Caco-2 (cell line): ENCODE measurements at regions of chr11 and their contacts with region 1.

Region 1: DNA sequence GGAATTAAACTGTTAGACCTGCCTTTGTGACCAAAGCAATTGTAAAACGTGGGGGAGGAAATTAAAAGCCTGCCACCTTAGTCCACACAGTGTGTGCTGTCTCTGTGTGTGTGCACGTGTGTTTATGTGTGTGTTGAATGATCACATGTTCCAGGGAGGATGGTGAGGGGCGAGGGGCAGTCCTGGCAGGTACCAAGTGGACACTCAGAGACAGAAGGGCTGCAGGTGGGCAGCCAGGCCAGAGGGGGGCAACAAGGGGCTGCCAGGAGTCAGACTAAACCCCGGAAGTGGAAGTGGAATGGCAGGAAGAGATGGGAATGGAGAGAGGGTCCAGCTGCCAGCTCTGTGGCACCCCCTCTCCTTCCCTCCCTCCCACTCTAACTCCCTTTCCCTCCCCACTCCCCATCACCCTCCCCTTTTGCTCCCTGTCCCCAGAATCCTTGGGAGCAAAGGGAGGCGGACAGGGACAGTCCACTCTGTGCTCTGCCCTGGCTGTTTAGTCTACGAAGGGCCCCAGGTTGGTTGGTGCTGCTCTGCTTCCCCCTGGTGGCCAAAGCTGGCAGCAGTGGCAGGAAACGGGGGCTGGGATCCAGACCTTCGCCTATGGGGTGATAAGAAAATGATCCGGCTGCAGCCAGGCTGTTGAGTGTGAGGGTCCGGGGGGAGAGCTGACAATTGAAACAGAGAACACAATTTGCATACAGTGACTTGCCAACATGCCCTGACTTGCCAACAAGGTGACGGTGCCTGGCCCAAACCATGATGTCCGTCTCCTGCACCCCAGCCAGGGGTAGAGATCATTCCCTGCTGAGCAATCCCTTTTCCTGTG is 24.4 kb downstream of the P2RY2 start:
- DNase-seq: peak; percentile 86 to 91
- H3K4me3 ChIP-seq: peak overlapping the region; percentile 36
- H3K4me3 Mint-ChIP-seq: peak overlapping the region; percentile 62
- H3K27ac Mint-ChIP-seq: peak overlapping the region; percentile 66
- H3K4me1 ChIP-seq: 0 out of 2 replicates have a peak, but pooled peaks cover 12% of the 10 kb centered on the region
- H3K4me1 Mint-ChIP-seq: peaks cover 17% of the 10 kb centered on the region
- H3K27me3 ChIP-seq: no peaks in the 10 kb centered on the region
- H3K27me3 Mint-ChIP-seq: no peaks in the 10 kb centered on the region
- CTCF ChIP-seq: peak; percentile 94 to 98

Region 2: DNA sequence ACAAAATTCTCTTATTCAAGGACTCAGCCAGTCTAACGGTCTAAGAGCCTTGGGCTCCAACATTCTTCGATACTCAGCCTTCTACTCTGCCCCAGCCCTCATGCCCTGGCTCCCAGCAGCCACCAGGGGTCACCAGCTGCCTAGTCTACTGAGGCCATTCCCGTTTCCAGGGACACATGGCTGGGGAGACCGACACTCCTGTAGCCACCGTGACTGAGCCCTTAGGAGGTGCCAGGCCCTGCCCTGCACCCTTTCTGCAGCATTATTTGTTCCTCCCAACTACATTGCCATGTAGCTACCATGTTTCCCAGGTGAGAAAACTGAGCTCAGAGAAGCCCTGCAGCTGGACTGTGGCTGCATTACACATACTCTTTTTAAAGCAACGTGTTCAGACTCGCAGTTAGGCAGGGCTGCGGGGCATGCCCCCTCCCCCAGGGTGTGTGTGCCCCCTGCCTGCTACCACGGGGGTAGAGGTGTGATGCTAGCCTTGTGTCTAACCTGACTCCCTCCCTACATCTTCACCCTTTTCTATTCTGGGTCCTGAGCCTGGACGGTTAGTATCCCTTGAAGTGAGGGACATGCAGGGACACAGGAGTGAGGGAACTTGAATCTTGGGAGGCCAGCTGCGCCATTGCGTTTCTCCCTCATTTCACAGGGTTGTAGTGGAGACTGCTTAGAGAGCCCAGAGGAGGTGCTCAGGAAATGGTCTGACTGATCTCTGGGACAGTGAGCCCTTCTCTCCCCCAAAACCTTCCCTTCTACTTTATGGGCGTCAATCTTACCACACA is 410.8 kb before region 1 on chr11:
- CTCF ChIA-PET with region 1: interaction called, 3 read pairs
- POLR2A ChIA-PET with region 1: no interaction called
- intact Hi-C with region 1: loop called (anchors 1 kb)
- DNase-seq: peak; percentile 89 to 93
- H3K4me3 ChIP-seq: no peak overlapping the region
- H3K4me3 Mint-ChIP-seq: no peak overlapping the region
- H3K27ac Mint-ChIP-seq: peak overlapping the region; percentile 58
- H3K4me1 ChIP-seq: peaks cover 10% of the 10 kb centered on the region
- H3K4me1 Mint-ChIP-seq: peaks cover 24% of the 10 kb centered on the region
- H3K27me3 ChIP-seq: no peaks in the 10 kb centered on the region
- H3K27me3 Mint-ChIP-seq: no peaks in the 10 kb centered on the region
- CTCF ChIP-seq: peak; percentile 98 to 99

Region 3: GRCh38 chr11:72924568-72925190 is 317.8 kb before region 1 on chr11:
- CTCF ChIA-PET with region 1: no interaction called
- POLR2A ChIA-PET with region 1: no interaction called
- intact Hi-C with region 1: loop called (anchors 2 kb)
- DNase-seq: peak in 1 of 2 experiments; percentile 40
- H3K4me3 ChIP-seq: no peak overlapping the region
- H3K4me3 Mint-ChIP-seq: no peak overlapping the region
- H3K27ac Mint-ChIP-seq: no peak overlapping the region
- H3K4me1 ChIP-seq: no peaks in the 10 kb centered on the region
- H3K4me1 Mint-ChIP-seq: no peaks in the 10 kb centered on the region
- H3K27me3 ChIP-seq: no peaks in the 10 kb centered on the region
- H3K27me3 Mint-ChIP-seq: no peaks in the 10 kb centered on the region
- CTCF ChIP-seq: peak; percentile 63 to 73

Region 4: DNA sequence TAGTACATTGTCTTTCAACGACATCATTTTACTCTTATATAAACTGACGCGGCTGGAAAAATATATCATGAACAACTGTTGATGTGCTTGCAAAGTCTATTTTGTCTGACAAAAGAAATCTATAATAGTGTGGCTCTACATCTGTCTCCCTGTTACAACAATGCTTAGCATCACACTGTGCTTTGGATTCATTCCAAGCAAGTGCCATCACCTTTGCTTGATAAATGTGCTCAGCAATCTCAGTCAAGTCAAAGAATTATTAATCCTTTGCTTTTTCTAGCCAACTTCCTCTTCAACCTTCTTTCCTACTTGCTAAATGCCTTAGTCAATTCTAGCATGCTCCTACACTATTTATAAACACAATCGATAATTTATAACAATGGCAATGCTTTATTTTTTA is 240.8 kb before region 1 on chr11:
- CTCF ChIA-PET with region 1: no interaction called
- POLR2A ChIA-PET with region 1: no interaction called
- intact Hi-C with region 1: no loop called
- DNase-seq: no peak
- H3K4me3 ChIP-seq: no peak overlapping the region
- H3K4me3 Mint-ChIP-seq: no peak overlapping the region
- H3K27ac Mint-ChIP-seq: no peak overlapping the region
- H3K4me1 ChIP-seq: peaks cover 12% of the 10 kb centered on the region
- H3K4me1 Mint-ChIP-seq: peaks cover 7% of the 10 kb centered on the region
- H3K27me3 ChIP-seq: no peaks in the 10 kb centered on the region
- H3K27me3 Mint-ChIP-seq: no peaks in the 10 kb centered on the region
- CTCF ChIP-seq: no peak

Region 5: GRCh38 chr11:73184953-73185671 is 57.4 kb before region 1 on chr11:
- CTCF ChIA-PET with region 1: interaction called, 41 read pairs
- POLR2A ChIA-PET with region 1: no interaction called
- intact Hi-C with region 1: loop called (anchors 1 kb)
- DNase-seq: peak; percentile 85 to 88
- H3K4me3 ChIP-seq: no peak overlapping the region
- H3K4me3 Mint-ChIP-seq: no peak overlapping the region
- H3K27ac Mint-ChIP-seq: no peak overlapping the region
- H3K4me1 ChIP-seq: peaks cover 21% of the 10 kb centered on the region
- H3K4me1 Mint-ChIP-seq: peaks cover 7% of the 10 kb centered on the region
- H3K27me3 ChIP-seq: no peaks in the 10 kb centered on the region
- H3K27me3 Mint-ChIP-seq: no peaks in the 10 kb centered on the region
- CTCF ChIP-seq: peak; percentile 98 to 99

Region 6: DNA sequence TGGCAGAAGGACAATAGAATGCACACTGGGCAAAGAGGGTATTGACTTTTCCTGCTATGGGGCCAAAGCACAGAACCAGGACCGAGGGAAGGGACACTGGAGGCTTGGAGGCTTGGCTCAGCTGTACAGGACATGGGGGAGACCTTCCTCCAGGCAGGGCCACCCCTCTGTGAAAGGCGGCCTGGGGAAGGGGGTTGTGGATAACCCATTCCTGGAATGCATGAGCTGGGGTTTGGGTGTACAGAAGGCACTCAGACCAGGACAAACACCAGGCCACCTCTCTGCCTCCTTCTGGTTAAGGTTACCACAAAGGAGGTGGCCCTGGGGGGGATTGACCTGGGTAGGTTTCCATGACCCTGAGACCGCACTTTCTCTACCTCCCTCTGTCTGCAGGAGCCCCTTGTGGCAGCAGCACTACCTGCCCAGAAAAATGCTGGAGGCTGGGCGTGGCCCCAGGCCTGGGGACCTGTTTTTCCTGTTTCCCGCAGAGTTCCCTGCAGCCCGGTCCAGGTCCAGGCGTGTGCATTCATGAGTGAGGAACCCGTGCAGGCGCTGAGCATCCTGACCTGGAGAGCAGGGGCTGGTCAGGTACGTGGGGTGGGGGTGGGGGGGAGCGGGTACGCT is 14.8 kb before region 1 on chr11:
- CTCF ChIA-PET with region 1: interaction called, 11 read pairs
- POLR2A ChIA-PET with region 1: no interaction called
- intact Hi-C with region 1: loop called (anchors 1 kb)
- DNase-seq: peak; percentile 97 to 98
- H3K4me3 ChIP-seq: no peak overlapping the region
- H3K4me3 Mint-ChIP-seq: no peak overlapping the region
- H3K27ac Mint-ChIP-seq: peak overlapping the region; percentile 64
- H3K4me1 ChIP-seq: peaks cover 39% of the 10 kb centered on the region
- H3K4me1 Mint-ChIP-seq: peaks cover 43% of the 10 kb centered on the region
- H3K27me3 ChIP-seq: no peaks in the 10 kb centered on the region
- H3K27me3 Mint-ChIP-seq: no peaks in the 10 kb centered on the region
- CTCF ChIP-seq: peak; percentile 78 to 96

Region 7: DNA sequence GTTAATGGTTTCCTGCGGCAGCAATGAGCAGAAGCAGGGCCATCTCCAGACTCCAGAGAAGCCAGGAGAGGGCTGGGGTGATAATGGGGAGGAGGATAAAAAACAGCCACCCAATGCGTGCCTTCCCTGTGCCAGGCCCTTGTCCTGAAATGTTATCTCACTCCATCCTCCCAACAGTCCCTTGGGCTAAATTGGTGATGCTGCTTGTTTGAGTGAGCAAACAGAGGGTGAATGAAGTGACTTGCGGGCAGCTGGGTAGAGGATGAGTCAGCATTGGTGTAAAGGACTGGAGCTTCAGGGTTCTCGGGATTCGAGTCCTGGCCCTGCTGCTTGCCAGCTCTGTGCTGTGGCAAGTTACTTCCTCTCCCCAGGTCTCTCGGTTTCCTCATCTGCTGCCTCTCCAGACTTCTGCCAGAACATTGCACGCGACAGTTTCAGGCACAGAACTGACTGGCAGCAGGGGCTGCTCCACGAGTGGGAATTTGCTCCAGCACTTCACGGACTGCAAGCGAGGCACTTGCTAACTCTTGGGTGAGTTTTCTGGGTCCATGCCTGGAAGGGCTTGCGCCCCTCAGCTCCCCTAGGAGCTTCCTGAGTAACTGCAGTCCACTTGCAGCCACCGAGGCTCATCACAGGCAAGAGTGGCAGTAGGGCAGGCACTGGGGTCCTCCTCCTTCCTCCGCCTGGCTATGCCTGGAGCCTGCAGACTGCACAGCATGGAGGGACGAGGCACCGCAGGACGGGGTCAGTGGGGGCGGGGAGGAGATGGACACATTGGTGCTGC is 29.7 kb after region 1 on chr11 and contains the start of gene P2RY6:
- CTCF ChIA-PET with region 1: interaction called, 11 read pairs
- POLR2A ChIA-PET with region 1: no interaction called
- intact Hi-C with region 1: loop called (anchors 1 kb)
- DNase-seq: peak; percentile 88 to 93
- H3K4me3 ChIP-seq: peak within 1 kb of the TSS; percentile 38
- H3K4me3 Mint-ChIP-seq: peak within 1 kb of the TSS; percentile 80
- H3K27ac Mint-ChIP-seq: peak within 1 kb of the TSS; percentile 99
- H3K4me1 ChIP-seq: peaks cover 79% of the 10 kb centered on the region
- H3K4me1 Mint-ChIP-seq: peaks cover 81% of the 10 kb centered on the region
- H3K27me3 ChIP-seq: no peaks in the 10 kb centered on the region
- H3K27me3 Mint-ChIP-seq: no peaks in the 10 kb centered on the region
- CTCF ChIP-seq: no peak
- total RNA-seq, gene P2RY6: 48.4 and 55.7 TPM in 2 replicates

Region 8: GRCh38 chr11:73288873-73289707 is 46.6 kb after region 1 on chr11:
- CTCF ChIA-PET with region 1: interaction called, 22 read pairs
- POLR2A ChIA-PET with region 1: interaction called, 5 read pairs
- intact Hi-C with region 1: loop called (anchors 1 kb)
- DNase-seq: peak; percentile 87 to 88
- H3K4me3 ChIP-seq: no peak overlapping the region
- H3K4me3 Mint-ChIP-seq: no peak overlapping the region
- H3K27ac Mint-ChIP-seq: peak overlapping the region; percentile 51
- H3K4me1 ChIP-seq: peaks cover 57% of the 10 kb centered on the region
- H3K4me1 Mint-ChIP-seq: peaks cover 27% of the 10 kb centered on the region
- H3K27me3 ChIP-seq: no peaks in the 10 kb centered on the region
- H3K27me3 Mint-ChIP-seq: no peaks in the 10 kb centered on the region
- CTCF ChIP-seq: peak; percentile 99